ENCODE measurements at regions of chr2 and their contacts with region 1.

Region 1: DNA sequence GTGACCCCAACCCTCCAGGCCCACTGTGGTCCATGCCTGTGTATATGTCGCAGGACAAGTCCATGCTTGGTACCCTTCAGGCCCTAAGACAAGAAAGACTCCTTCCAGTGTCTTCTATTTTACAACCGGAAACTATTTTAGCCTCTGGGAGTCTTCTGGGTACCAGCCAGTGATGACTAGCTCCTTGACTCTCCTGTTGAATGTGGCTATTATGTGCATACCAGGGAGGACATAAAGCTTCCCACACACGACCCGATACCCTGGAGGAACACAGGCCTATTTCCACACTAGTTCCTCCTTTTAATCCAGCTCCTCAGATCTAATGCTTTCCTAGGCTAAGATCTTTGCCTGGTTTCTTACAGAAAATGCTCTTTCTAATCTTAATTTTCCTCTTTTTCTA is 178.1 kb downstream of the NCKAP5 start:
- DNase-seq: no peak
- H3K4me3 ChIP-seq: no peak overlapping the region
- CTCF ChIP-seq: no peak

Region 2: DNA sequence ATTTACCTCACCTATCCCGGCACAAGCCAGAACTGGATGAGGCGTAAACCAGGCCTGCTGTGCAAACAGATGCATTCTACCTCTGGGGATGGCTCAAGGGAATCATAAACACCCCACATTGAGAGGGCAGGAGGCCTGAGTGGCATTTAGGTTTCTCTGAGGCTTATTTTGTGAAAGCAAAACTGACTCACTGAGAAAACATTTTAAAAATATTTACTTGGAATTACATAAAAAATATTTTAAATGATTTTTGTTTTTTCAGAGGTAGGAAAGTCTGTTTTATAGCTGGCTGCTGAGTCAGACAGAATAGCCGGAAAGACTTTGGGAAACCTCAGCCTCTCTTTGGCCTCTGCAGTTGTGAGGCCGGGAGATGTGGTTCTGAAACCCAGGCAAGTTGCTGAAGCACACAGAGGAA is 66.0 kb before region 1 on chr2:
- in situ Hi-C with region 1: loop called (anchors 5 kb)
- DNase-seq: peak; percentile 20
- H3K4me3 ChIP-seq: no peak overlapping the region
- CTCF ChIP-seq: no peak

Region 3: DNA sequence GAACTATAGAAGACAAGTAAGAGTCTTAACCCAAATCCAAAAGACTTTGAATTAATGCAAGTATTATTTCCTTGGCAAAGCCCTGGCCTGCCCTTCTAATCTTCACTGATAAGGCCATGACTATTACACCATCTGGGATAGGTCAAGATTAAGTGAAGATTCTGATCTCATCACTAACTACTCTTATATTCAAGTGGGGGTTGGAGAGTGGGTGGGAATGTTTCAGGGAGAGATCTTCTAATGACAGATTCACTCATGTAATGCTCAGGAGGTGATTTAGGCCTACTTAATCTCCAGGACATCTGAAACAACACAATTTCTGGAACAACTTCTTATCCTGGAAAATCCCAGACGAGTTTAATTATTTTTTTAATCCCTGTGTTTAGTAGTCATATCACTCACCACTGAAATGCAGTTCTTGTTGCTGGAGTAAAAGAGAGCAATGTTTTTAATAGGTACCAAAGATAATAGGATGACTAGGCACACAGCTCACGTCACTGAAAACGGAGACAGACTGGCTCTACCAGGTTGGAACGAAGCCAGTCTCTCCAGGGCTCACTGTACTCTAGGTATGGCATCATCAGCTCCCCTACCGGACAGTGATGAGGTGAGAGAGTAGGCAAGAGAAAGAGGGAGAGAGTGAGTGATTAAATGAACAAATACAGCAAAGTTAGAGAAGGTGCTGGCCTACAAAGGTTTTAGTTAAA is 45.0 kb after region 1 on chr2:
- in situ Hi-C with region 1: loop called (anchors 5 kb)
- DNase-seq: peak; percentile 6
- H3K4me3 ChIP-seq: no peak overlapping the region
- CTCF ChIP-seq: no peak

Measured in astrocyte of the cerebellum (primary cell).